ENCODE measurements at regions of chr19 and their contacts with region 1.

Region 1: GRCh38 chr19:18112989-18113478 is 15.5 kb downstream of the MAST3 start:
- DNase-seq: peak; percentile 84

Region 2: DNA sequence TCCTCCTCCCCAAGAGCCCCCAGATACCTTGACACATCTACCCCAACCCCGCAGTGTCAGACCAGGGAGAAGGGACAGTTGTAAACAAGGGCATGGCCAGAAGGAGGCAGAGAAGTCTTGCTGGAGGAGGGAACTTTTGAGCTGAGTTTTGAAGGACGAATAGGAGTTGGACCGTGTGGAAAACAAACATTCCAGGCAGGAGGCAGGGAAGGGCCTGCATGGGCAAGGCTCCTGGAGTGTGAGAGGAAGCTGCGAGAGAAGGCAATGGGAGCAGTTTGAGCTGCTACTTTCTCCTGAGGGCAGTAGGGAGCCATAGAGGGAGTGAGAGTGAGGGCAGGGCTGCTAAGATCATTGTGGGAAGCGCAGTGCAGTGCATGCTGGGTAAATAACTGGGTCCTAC is 49.6 kb before region 1 on chr19:
- CTCF ChIA-PET with region 1: interaction called, 14 read pairs
- POLR2A ChIA-PET with region 1: no interaction called
- DNase-seq: peak; percentile 58

Region 3: DNA sequence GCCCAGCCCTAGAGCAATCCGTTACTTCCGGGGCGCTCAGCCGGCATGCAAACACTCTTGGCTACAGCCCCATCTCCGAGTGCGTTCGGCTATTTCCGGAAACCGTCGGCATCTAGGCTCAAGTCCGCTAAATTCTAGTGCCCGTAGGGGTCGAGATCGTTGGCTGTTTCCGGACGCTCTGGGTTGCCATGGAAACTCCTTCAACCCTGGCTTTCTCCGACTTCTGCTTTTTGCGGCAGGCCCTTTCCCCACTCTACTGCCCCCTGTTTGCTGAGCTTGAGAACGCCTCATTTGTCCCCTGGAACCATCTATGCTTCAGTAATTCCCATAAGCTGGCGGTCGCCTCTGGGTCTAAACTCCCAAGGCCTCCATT is 39.4 kb after region 1 on chr19:
- CTCF ChIA-PET with region 1: interaction called, 12 read pairs
- POLR2A ChIA-PET with region 1: interaction called, 4 read pairs
- DNase-seq: peak; percentile 98

Region 4: DNA sequence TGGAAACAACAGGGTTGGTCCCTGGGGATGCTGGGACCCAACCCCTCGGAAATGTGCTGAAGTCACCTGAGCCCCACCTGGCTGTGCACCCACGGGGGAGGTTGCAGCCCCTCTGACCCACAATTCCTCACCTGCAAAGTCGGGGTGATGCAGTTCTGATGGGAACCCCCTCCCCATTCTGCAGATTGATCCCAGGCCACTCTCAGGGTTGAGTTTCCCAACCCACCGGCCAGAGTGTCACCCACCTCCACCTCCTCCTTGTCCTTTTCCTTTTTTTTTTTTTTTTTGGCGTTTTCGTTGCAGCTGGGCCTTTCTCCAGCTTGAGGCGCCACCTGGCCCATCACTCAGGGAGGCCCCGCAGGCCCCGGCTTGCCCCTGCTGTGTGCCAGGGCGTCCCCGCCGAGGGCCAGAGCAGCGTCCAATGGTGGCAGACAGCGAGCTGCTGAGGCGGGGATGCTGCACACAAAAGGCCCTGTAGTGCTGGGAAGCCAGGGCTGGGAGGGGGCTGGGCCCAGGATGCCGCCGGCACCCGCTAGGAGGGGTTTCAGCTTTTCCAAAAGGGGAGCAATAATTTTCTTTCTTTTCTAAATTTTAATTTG is 44.5 kb after region 1 on chr19:
- CTCF ChIA-PET with region 1: interaction called, 10 read pairs
- POLR2A ChIA-PET with region 1: interaction called, 4 read pairs
- DNase-seq: no peak